ENCODE measurements at regions of chr2 and their contacts with region 1.

Region 1: GRCh38 chr2:48946449-48947048 is 191.0 kb upstream of the LHCGR start:
- DNase-seq: peak; percentile 56
- ATAC-seq: peak; percentile 69
- H3K4me3 ChIP-seq: no peak overlapping the region
- H3K4me3 Mint-ChIP-seq: no peak overlapping the region
- H3K27ac ChIP-seq: no peak overlapping the region
- H3K27ac Mint-ChIP-seq: no peak overlapping the region
- H3K4me1 ChIP-seq: no peaks in the 10 kb centered on the region
- H3K4me1 Mint-ChIP-seq: peaks cover 2% of the 10 kb centered on the region
- H3K27me3 ChIP-seq: no peaks in the 10 kb centered on the region
- H3K27me3 Mint-ChIP-seq: no peaks in the 10 kb centered on the region
- CTCF ChIP-seq: peak; percentile 99

Region 2: DNA sequence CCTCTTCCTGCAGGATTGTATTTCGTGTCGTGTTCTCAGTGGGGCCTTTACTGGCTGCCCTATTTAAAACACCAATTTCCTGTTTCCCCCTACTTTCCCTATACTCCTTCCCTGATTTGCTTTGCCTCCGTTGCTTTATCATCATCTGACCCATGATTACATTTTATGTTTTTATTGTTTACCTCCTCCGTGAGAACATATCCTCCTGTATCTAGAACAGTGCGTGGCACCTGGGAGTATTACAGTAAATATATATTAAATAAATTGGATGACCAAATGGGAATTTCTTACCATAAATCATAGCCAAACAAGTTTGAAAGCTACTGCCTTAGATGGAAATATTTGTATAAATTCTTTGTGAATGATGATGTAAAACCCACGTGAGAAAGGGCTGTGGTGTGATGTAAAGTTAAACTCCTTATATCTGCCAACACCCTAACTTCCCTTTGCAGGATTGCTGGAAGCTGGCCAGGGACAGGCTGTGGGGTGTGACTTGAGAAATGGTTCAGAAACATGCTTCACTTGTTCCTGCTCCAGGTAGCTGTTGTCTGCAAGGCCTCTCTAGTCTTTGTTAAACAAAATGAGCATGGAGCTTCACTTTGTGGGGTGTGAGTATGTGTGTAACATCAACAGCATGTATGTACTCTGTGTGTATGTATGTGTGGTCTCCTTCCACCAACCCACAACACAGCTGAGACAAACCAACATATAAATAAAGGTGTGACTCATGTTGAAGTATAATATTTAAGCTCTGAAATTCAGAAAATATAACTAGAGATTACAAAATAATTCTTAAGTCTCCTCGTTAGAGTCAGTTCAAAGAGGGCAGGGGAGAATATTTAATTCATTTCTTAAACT is 231.3 kb before region 1 on chr2:
- CTCF ChIA-PET with region 1: no interaction called
- POLR2A ChIA-PET with region 1: no interaction called
- intact Hi-C with region 1: no loop called
- DNase-seq: no peak
- ATAC-seq: no peak
- H3K4me3 ChIP-seq: no peak overlapping the region
- H3K4me3 Mint-ChIP-seq: no peak overlapping the region
- H3K27ac ChIP-seq: no peak overlapping the region
- H3K27ac Mint-ChIP-seq: no peak overlapping the region
- H3K4me1 ChIP-seq: no peaks in the 10 kb centered on the region
- H3K4me1 Mint-ChIP-seq: no peaks in the 10 kb centered on the region
- H3K27me3 ChIP-seq: no peaks in the 10 kb centered on the region
- H3K27me3 Mint-ChIP-seq: peaks cover 18% of the 10 kb centered on the region
- CTCF ChIP-seq: no peak

Region 3: GRCh38 chr2:49102146-49102545 is 155.6 kb after region 1 on chr2:
- CTCF ChIA-PET with region 1: no interaction called
- POLR2A ChIA-PET with region 1: no interaction called
- intact Hi-C with region 1: no loop called
- DNase-seq: no peak
- ATAC-seq: no peak
- H3K4me3 ChIP-seq: no peak overlapping the region
- H3K4me3 Mint-ChIP-seq: no peak overlapping the region
- H3K27ac ChIP-seq: no peak overlapping the region
- H3K27ac Mint-ChIP-seq: no peak overlapping the region
- H3K4me1 ChIP-seq: no peaks in the 10 kb centered on the region
- H3K4me1 Mint-ChIP-seq: no peaks in the 10 kb centered on the region
- H3K27me3 ChIP-seq: no peaks in the 10 kb centered on the region
- H3K27me3 Mint-ChIP-seq: no peaks in the 10 kb centered on the region
- CTCF ChIP-seq: no peak

Region 4: GRCh38 chr2:49490710-49491109 is 544.2 kb after region 1 on chr2:
- CTCF ChIA-PET with region 1: no interaction called
- POLR2A ChIA-PET with region 1: no interaction called
- intact Hi-C with region 1: loop called (anchors 5 kb)
- DNase-seq: peak; percentile 6
- ATAC-seq: no peak
- H3K4me3 ChIP-seq: no peak overlapping the region
- H3K4me3 Mint-ChIP-seq: no peak overlapping the region
- H3K27ac ChIP-seq: no peak overlapping the region
- H3K27ac Mint-ChIP-seq: no peak overlapping the region
- H3K4me1 ChIP-seq: no peaks in the 10 kb centered on the region
- H3K4me1 Mint-ChIP-seq: peaks cover 2% of the 10 kb centered on the region
- H3K27me3 ChIP-seq: no peaks in the 10 kb centered on the region
- H3K27me3 Mint-ChIP-seq: no peaks in the 10 kb centered on the region
- CTCF ChIP-seq: no peak

Region 5: DNA sequence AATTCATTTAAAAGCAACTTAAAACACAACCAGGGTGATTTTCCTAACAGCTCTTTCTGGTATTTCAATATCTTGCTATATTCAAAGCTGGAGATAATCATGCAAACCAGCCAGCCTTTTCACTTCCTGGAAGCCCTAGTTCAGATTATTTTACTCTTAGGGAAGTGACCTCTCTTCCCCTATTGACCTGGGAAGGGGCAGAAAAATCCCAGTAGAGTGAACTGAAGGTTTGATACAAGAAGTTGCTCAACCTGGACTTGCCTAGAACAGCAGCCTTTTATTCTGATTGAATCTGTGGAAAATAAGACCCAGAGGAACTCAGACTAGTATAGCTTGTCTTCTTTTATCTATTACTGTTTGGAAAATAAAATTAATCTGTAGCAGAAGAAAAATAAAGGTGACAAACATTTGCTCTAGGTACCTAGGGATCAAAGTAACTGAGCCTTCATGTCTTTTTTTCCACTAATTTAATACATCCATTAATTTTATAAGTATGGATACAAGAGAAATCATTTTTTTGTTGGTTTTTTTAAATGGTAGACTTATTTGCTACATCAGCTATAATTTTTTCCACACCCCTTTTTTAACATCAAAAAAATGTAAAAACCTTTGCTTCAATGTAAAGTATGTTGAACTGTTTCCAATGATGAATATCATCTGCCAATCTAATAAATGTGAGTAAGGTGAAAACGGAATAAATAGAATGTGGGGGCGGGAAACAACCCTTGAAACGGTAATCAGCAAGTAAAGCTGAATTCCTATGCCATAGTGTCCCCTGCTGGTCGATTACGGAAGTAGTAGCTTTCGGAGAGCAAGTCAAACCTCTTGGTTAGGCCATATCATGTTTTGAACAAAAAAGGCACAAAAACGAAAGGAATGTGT is 1455.5 kb after region 1 on chr2:
- CTCF ChIA-PET with region 1: interaction called, 13 read pairs
- POLR2A ChIA-PET with region 1: no interaction called
- intact Hi-C with region 1: no loop called
- DNase-seq: peak; percentile 8
- ATAC-seq: no peak
- H3K4me3 ChIP-seq: no peak overlapping the region
- H3K4me3 Mint-ChIP-seq: no peak overlapping the region
- H3K27ac ChIP-seq: no peak overlapping the region
- H3K27ac Mint-ChIP-seq: no peak overlapping the region
- H3K4me1 ChIP-seq: no peaks in the 10 kb centered on the region
- H3K4me1 Mint-ChIP-seq: no peaks in the 10 kb centered on the region
- H3K27me3 ChIP-seq: no peaks in the 10 kb centered on the region
- H3K27me3 Mint-ChIP-seq: no peaks in the 10 kb centered on the region
- CTCF ChIP-seq: peak; percentile 63

Measured in B cell (primary cell).